Activated CD8-positive, alpha-beta T cell treated with anti-CD3 and anti-CD28 coated beads for 36 hours (primary cell): ENCODE measurements at regions of chr6 and their contacts with region 1.

Region 1: DNA sequence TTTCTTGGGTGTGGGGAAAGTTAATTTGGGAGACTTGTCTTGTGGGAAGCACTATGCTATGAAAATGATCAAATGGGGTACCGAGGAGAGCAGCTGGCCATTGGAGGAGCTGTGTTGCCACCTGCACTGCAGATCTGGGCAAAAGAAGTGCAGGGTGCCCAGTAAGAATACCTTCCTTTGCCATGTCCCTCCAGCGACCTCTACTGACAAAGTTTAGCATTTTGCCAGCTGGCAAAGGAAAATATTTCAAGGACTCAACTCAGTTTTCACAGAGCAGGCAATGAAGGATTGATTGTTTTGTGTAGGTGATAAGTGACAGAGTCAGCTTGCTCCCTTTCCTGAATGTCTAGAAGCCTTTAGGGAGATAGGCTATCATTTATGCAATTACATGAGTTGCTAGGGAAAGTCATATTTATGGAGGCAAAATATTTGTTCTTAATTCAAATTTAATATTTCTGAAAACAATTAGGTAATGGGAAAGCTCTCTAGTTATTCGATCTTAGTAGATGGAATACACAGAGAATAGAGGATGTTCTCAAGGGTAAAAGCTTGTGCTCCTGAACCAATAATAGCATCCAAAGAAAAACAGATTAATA is 118.4 kb downstream of the FARS2 start:
- DNase-seq: peak; percentile 33
- ATAC-seq: no peak
- H3K4me3 Mint-ChIP-seq: no peak overlapping the region
- H3K27ac Mint-ChIP-seq: no peak overlapping the region
- H3K4me1 Mint-ChIP-seq: peaks cover 4% of the 10 kb centered on the region
- H3K27me3 Mint-ChIP-seq: no peaks in the 10 kb centered on the region
- CTCF ChIP-seq: peak; percentile 46

Region 2: DNA sequence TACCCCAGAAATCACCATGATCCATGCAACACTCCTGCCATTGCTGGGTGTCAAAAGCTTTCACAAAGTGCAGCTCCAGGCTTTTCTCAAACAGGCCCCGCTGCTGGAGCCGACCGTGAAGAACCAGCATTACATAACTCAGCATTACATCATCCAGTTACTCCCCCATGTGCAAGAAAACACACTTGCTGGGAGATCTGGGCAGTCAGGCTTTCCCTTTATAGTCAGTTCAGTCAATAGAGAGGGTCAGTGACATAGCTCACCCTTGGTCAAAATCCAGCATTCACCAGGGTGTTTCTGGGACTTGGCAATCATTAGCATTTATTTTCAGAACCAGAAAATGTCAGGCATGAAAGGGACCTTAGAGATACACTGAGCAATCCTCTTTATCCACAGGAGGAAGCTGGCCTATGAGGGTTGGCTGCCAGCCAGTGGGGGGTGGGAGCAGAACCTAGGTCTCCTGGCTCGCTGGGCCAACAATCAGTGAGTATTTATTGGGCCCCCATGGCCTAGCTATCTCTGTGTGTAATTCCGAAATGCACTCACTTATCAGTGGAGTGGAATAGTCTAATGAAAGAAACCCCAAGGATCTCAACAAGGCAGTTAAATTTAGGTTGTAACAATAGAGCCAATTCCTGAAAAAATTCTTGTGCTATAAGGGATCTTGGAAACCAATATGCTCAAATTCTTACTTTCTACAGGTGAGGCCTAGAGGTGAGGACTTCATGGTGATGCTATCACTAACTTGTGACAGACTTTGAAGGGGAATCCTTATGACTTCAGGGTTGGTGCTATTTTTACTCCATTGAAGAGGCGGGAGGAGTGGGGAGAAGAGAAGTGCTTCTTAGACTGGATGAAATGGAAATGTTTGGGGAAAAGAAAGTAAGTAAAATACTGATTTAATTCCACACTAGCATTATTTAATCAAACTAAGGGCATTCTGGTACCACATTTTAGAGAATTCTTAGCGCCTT is 173.6 kb before region 1 on chr6:
- CTCF ChIA-PET with region 1: no interaction called
- POLR2A ChIA-PET with region 1: no interaction called
- intact Hi-C with region 1: loop called (anchors 10 kb)
- DNase-seq: no peak
- ATAC-seq: no peak
- H3K4me3 Mint-ChIP-seq: no peak overlapping the region
- H3K27ac Mint-ChIP-seq: no peak overlapping the region
- H3K4me1 Mint-ChIP-seq: peaks cover 3% of the 10 kb centered on the region
- H3K27me3 Mint-ChIP-seq: no peaks in the 10 kb centered on the region
- CTCF ChIP-seq: no peak

Region 3: GRCh38 chr6:5619249-5619648 is 239.5 kb after region 1 on chr6:
- CTCF ChIA-PET with region 1: no interaction called
- POLR2A ChIA-PET with region 1: no interaction called
- intact Hi-C with region 1: no loop called
- DNase-seq: peak; percentile 63
- ATAC-seq: peak; percentile 100
- H3K4me3 Mint-ChIP-seq: peak overlapping the region; percentile 11
- H3K27ac Mint-ChIP-seq: peak overlapping the region; percentile 79
- H3K4me1 Mint-ChIP-seq: peaks cover 17% of the 10 kb centered on the region
- H3K27me3 Mint-ChIP-seq: no peaks in the 10 kb centered on the region
- CTCF ChIP-seq: no peak